ENCODE measurements at regions of chr1 and their contacts with region 1.

Region 1: GRCh38 chr1:29550119-29550898 is 314.0 kb downstream of the PTPRU start:
- DNase-seq: no peak
- H3K4me3 ChIP-seq: no peak overlapping the region
- H3K27ac ChIP-seq: no peak overlapping the region
- H3K4me1 ChIP-seq: peaks cover 4% of the 10 kb centered on the region
- H3K27me3 ChIP-seq: no peaks in the 10 kb centered on the region
- CTCF ChIP-seq: no peak

Region 2: GRCh38 chr1:29482976-29483375 is 67.3 kb before region 1 on chr1:
- CTCF ChIA-PET with region 1: no interaction called
- dilution Hi-C with region 1: loop called (anchors 5 kb)
- in situ Hi-C with region 1: no loop called
- intact Hi-C with region 1: no loop called
- DNase-seq: no peak
- H3K4me3 ChIP-seq: no peak overlapping the region
- H3K27ac ChIP-seq: no peak overlapping the region
- H3K4me1 ChIP-seq: no peaks in the 10 kb centered on the region
- H3K27me3 ChIP-seq: peaks cover 4% of the 10 kb centered on the region
- CTCF ChIP-seq: no peak

Region 3: GRCh38 chr1:29864431-29865022 is 314.2 kb after region 1 on chr1:
- CTCF ChIA-PET with region 1: no interaction called
- dilution Hi-C with region 1: no loop called
- in situ Hi-C with region 1: no loop called
- intact Hi-C with region 1: no loop called
- DNase-seq: no peak
- H3K4me3 ChIP-seq: no peak overlapping the region
- H3K27ac ChIP-seq: no peak overlapping the region
- H3K4me1 ChIP-seq: no peaks in the 10 kb centered on the region
- H3K27me3 ChIP-seq: peaks cover 3% of the 10 kb centered on the region
- CTCF ChIP-seq: no peak

Region 4: DNA sequence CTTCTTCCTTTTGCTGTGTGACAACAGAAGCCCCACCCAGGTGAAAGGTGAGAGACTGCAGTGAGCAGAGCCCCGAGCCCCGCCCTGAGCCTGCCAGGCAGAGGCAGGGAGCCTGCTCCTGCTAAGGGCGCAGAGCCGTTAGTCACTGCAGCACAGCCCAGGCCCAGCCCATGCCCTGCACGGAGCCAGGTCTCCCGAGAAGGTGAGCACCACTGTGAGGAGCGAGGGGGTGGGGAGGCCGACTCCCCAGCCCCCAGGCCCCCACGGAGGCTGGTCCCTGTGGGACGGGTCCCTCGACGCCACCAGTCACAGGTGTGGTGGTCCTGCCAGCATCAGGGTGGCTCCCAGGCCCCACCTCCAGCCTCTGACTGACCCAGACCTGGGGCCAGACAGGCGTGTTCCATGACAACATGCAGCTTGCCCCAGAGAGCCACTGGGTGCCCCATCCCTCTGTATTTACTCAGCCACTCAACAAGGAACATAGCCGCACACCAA is 1107.5 kb after region 1 on chr1:
- CTCF ChIA-PET with region 1: no interaction called
- dilution Hi-C with region 1: no loop called
- in situ Hi-C with region 1: no loop called
- intact Hi-C with region 1: loop called (anchors 5 kb)
- DNase-seq: no peak
- H3K4me3 ChIP-seq: no peak overlapping the region
- H3K27ac ChIP-seq: no peak overlapping the region
- H3K4me1 ChIP-seq: peaks cover 18% of the 10 kb centered on the region
- H3K27me3 ChIP-seq: no peaks in the 10 kb centered on the region
- CTCF ChIP-seq: no peak

Measured in mammary epithelial cell (primary cell).